ENCODE measurements at regions of chr14 and their contacts with region 1.

Region 1: GRCh38 chr14:62081012-62081612 is 318.9 kb downstream of the SNAPC1 start:
- DNase-seq: peak; percentile 84
- ATAC-seq: peak; percentile 79
- H3K4me3 ChIP-seq: peak overlapping the region in 3 of 5 experiments; percentile 2 to 43 (median 25)
- H3K4me3 Mint-ChIP-seq: peak overlapping the region; percentile 58
- H3K27ac ChIP-seq: peak overlapping the region; percentile 82 to 94
- H3K27ac Mint-ChIP-seq: peak overlapping the region; percentile 88
- H3K4me1 ChIP-seq: peaks cover 74% of the 10 kb centered on the region in 2 donors
- H3K4me1 Mint-ChIP-seq: peaks cover 79% of the 10 kb centered on the region
- H3K27me3 ChIP-seq: no peaks in the 10 kb centered on the region
- H3K27me3 Mint-ChIP-seq: no peaks in the 10 kb centered on the region
- CTCF ChIP-seq: no peak

Region 2: DNA sequence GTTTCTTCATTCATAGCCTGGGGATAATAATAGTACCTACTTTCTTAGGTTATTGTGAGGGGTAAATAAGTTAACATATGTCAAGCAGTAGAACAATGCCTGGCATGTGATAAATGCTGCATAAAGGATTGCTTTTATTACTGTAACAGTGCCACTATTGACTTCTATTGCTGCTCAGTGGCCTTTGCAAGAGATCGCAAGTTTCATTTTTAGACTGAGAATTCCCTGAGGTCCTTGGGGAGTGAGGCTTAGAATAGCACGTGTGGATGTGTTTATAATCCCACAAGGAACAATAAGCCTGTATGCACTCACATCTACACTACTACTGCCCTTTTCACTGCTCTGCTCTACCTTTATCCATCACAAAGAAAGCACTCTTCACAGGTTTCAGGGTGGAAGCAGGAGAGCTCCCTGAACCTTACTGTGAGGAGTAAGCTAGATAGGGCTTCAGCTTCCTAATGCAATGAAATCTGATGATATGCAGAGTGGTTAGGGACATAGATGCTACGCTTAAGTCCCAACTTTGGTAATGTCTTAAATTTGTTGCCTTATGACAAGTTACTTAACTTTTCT is 16.3 kb before region 1 on chr14:
- CTCF ChIA-PET with region 1: interaction called, 3 read pairs
- POLR2A ChIA-PET with region 1: no interaction called
- intact Hi-C with region 1: loop called (anchors 2 kb)
- DNase-seq: no peak
- ATAC-seq: no peak
- H3K4me3 ChIP-seq: no peak overlapping the region
- H3K4me3 Mint-ChIP-seq: no peak overlapping the region
- H3K27ac ChIP-seq: no peak overlapping the region
- H3K27ac Mint-ChIP-seq: no peak overlapping the region
- H3K4me1 ChIP-seq: peaks cover 19 to 25% of the 10 kb centered on the region in 2 donors
- H3K4me1 Mint-ChIP-seq: peaks cover 23% of the 10 kb centered on the region
- H3K27me3 ChIP-seq: no peaks in the 10 kb centered on the region
- H3K27me3 Mint-ChIP-seq: no peaks in the 10 kb centered on the region
- CTCF ChIP-seq: no peak